Kidney (tissue), 22 donors: ENCODE measurements at regions of chr11 and their contacts with region 1.

Region 1: DNA sequence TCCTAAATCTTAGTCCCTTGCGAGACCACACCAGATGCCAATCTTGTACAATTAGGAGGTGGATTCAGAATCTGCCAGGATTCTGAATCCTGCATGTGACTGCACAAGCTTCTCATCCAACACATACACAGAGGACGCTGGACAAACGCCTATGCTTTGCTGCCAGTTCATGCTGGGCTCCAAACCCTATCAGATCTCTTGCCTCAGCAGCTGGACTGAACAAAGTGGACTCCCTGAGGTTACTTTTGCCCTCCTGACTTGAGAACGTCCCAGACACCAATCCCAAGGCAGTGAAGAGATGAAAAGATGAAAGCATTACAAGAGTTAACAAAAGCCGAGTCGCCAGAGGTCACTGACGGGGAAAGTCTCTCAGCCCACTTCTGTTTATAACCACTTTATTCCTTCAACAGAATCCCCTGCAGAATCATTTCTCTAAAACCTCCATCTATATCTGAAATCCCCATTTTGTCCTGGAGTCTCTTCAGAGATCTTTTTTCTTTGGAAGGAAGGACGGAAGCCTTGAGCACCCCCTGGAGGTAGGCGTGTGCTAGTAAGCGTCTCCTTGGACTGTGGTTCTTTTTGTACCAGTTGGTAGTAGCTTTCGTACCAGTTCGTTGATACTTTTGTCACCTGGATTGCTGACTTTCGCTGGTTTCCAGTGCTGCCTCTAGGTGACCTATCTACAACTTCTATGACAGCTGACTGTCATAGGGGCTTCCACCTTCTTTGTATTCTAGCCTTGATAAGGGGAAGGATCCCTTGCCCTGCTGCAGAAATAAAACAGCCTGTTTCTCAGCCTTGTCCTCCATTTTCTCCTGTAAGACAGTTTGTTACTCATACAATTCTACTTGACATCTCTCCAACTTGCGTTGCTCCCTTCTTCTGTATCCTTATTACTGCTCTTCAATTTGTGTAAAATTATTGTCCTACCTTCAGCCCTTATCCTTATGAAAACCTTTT is 26.1 kb upstream of the EED start:
- DNase-seq: peak; percentile 70 to 92 (median 75)
- H3K4me3 ChIP-seq: peak overlapping the region in 2 of 3 donors; percentile 55 to 64
- H3K27ac ChIP-seq: no peak overlapping the region
- H3K4me1 ChIP-seq: peaks cover 0 to 3% (median 0%) of the 10 kb centered on the region in 3 donors
- H3K27me3 ChIP-seq: no peaks in the 10 kb centered on the region
- CTCF ChIP-seq: peak; percentile 94

Region 2: GRCh38 chr11:85854557-85855340 is 363.7 kb before region 1 on chr11:
- intact Hi-C with region 1: loop called (anchors 10 kb)
- DNase-seq: peak; percentile 96 to 98 (median 97)
- H3K4me3 ChIP-seq: peak overlapping the region; percentile 74 to 87 (median 86)
- H3K27ac ChIP-seq: peak overlapping the region; percentile 88 to 92
- H3K4me1 ChIP-seq: peaks cover 0 to 3% (median 0%) of the 10 kb centered on the region in 3 donors
- H3K27me3 ChIP-seq: no peaks in the 10 kb centered on the region
- CTCF ChIP-seq: peak; percentile 76

Region 3: GRCh38 chr11:85941380-85941973 is 276.9 kb before region 1 on chr11:
- intact Hi-C with region 1: loop called (anchors 10 kb)
- DNase-seq: peak in 2 of 5 donors; percentile 40 to 50
- H3K4me3 ChIP-seq: no peak overlapping the region
- H3K27ac ChIP-seq: no peak overlapping the region
- H3K4me1 ChIP-seq: peaks cover 0 to 3% (median 0%) of the 10 kb centered on the region in 3 donors
- H3K27me3 ChIP-seq: no peaks in the 10 kb centered on the region
- CTCF ChIP-seq: peak; percentile 67

Region 4: DNA sequence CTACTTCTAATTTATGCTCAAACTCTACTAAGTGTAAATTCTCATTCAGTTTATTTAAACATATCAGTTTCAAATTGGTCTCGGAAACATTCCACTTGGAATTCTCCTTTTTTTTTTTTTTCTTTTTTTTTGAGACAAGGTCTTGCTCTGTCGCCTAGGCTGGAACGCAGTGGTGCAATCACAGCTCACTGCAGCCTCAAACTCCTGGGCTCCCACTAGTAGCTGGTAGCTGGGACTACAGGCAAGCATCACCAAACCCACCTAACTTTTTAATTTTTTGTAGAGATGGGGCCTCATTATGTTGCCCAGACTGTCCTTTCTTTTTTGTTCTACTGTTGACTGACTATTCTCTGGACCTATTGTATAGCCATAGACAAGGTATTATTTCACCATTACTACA is 123.0 kb after region 1 on chr11:
- intact Hi-C with region 1: no loop called
- DNase-seq: no peak
- H3K4me3 ChIP-seq: no peak overlapping the region
- H3K27ac ChIP-seq: no peak overlapping the region
- H3K4me1 ChIP-seq: no peaks in the 10 kb centered on the region
- H3K27me3 ChIP-seq: no peaks in the 10 kb centered on the region
- CTCF ChIP-seq: no peak

Region 5: DNA sequence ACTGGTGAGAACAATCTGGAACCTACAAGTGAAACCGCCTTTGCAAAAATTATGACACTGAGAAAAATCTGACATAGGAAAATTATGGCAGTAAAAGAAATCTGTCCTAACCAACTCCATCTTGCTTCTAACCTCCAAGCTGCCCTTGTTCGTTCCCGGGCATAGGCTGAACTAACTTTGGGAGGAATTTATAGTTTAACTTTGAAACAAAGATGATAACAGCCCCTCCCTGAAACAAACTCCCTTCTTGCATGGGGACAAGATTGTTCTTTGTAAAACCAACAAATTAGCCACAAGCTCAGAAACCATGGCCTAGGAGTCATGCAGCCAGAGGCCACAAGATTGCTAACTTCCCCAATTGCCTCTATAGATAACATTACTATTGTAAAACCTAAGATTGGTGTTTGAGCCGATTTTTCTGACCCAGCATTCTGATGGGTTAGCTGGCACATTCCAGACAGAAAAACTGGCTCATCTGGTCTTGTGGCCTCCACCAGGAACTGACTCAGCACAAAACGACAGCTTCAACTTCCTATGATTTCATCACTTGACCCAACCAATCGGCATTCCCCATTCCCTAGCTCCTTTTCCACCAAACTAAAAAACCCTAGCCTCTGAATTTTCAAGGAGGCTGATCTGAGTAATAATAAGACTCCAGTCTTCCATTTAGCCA is 152.7 kb after region 1 on chr11:
- intact Hi-C with region 1: no loop called
- DNase-seq: no peak
- H3K4me3 ChIP-seq: no peak overlapping the region
- H3K27ac ChIP-seq: no peak overlapping the region
- H3K4me1 ChIP-seq: no peaks in the 10 kb centered on the region
- H3K27me3 ChIP-seq: no peaks in the 10 kb centered on the region
- CTCF ChIP-seq: no peak